ENCODE measurements at regions of chr14 and their contacts with region 1.

Region 1: GRCh38 chr14:94584591-94585280 is 3.5 kb downstream of the SERPINA5 start:
- DNase-seq: no peak
- H3K4me3 ChIP-seq: no peak overlapping the region
- H3K27ac ChIP-seq: no peak overlapping the region
- H3K4me1 ChIP-seq: peaks cover 0 to 4% (median 1%) of the 10 kb centered on the region in 4 experiments; a peak in 1 of 7 replicates
- H3K27me3 ChIP-seq: no peaks in the 10 kb centered on the region; a peak in 1 of 7 replicates
- CTCF ChIP-seq: no peak
- EP300 ChIP-seq: no peak
- POLR2A ChIP-seq: no peak
- RAD21 ChIP-seq: no peak

Region 2: DNA sequence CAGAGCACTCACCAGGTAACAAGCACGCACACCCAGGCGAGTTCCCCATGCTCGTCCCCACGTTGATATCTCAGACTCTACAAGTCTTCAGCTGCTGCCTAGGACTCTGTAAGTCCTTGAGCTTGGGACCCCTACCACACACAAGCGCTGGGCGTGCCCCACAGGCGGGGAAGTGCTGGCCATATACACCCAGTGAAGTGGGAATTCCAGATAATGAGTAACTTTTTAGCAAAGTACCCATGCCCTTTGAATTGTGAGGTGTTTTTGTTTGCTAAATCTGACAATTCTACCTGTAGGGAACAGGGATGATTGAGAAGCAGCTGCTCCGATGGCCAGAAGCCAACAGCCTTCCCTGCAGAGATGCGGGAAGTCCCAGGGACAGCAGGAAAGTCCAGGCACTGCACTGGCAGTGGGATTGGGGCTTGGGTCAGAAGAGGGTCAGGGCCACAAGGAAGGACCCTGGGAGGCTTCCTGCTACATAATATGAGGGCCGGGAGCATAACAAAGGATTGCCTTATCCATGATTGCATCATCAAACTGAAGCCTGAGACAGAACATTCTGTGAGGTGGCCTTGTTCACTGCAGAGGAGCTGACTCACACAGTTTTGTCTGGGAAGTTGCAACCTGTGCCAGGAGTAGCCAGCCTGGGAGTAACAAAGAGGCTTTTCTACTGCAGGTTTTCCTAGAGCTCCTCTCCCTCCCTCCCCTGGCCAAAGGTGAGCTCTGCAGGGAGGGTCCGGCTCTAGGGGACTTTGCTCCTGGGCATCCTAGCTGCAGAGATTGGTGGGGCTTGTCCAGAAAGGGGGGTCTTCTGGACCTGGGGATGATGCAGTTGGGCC is 14.3 kb after region 1 on chr14:
- CTCF ChIA-PET with region 1: interaction called, 13 read pairs
- POLR2A ChIA-PET with region 1: no interaction called
- DNase-seq: no peak
- H3K4me3 ChIP-seq: no peak overlapping the region
- H3K27ac ChIP-seq: no peak overlapping the region
- H3K4me1 ChIP-seq: peaks cover 0 to 7% (median 4%) of the 10 kb centered on the region in 4 experiments; a peak in 5 of 7 replicates
- H3K27me3 ChIP-seq: no peaks in the 10 kb centered on the region
- CTCF ChIP-seq: peak; percentile 2 to 15 (median 3); a peak in 3 of 4 replicates
- EP300 ChIP-seq: no peak
- POLR2A ChIP-seq: no peak
- RAD21 ChIP-seq: peak in 1 of 2 experiments; percentile 33; a peak in 1 of 4 replicates

Region 3: DNA sequence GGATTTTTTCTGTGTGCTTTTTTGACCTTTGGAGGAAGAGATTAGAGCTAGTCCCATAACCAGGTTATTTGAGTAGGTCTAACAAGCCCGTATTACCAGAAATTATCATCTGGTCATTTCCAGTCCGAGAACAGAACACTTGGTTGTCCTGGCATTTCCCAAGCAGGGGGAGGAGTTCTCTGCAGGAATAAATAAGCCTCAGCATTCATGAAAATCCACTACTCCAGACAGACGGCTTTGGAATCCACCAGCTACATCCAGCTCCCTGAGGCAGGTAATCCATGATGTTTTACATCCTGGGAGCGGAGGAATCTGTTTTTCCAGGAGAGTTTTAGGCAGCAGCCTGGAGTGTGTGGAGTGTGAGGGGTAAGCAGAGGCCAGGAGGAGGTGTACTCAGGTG is 27.4 kb after region 1 on chr14 and contains the start of gene SERPINA3:
- CTCF ChIA-PET with region 1: no interaction called
- POLR2A ChIA-PET with region 1: no interaction called
- DNase-seq: no peak
- H3K4me3 ChIP-seq: no peak within 1 kb of the TSS
- H3K27ac ChIP-seq: no peak within 1 kb of the TSS
- H3K4me1 ChIP-seq: no peaks in the 10 kb centered on the region; a peak in 1 of 7 replicates
- H3K27me3 ChIP-seq: no peaks in the 10 kb centered on the region
- CTCF ChIP-seq: no peak
- EP300 ChIP-seq: no peak
- POLR2A ChIP-seq: no peak
- RAD21 ChIP-seq: no peak
- total RNA-seq, gene SERPINA3: not detected in 2 replicates

Measured in H1 (cell line).